K562 (cell line): ENCODE measurements at regions of chr1 and their contacts with region 1.

Region 1: DNA sequence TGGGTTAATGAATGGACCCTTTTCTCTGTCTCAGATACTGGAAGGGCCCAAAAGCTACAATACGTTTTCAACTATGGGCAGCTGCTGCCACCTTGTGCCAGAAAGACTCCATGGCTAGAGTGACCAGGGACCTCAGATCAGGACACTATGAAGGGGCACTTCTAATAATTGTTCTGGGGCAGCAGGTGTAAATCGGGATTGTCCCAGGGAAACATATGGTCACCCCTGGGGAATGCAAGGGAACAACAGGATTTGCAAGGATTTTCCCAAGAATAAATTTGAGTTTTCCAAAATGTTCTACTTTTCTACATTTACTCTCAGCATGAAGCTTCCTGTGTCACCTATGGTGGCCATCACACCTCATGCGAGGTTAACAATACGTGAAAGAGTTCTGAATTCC is 12.0 kb upstream of the FCAMR start:
- DNase-seq: peak; percentile 68 to 78 (median 74)
- ATAC-seq: peak; percentile 93
- H3K4me3 ChIP-seq: no peak overlapping the region
- H3K27ac ChIP-seq: no peak overlapping the region
- H3K4me1 ChIP-seq: peaks cover 0 to 23% of the 10 kb centered on the region in 2 experiments; a peak in 3 of 5 replicates
- H3K27me3 ChIP-seq: no peaks in the 10 kb centered on the region
- CTCF ChIP-seq: peak; percentile 87 to 90 (median 88)
- EP300 ChIP-seq: no peak
- POLR2A ChIP-seq: no peak
- RAD21 ChIP-seq: peak; percentile 92 to 94

Region 2: GRCh38 chr1:206583707-206584648 is 398.2 kb before region 1 on chr1:
- CTCF ChIA-PET with region 1: no interaction called
- POLR2A ChIA-PET with region 1: no interaction called
- in situ Hi-C with region 1: no loop called
- intact Hi-C with region 1: no loop called
- DNase-seq: peak; percentile 89 to 91 (median 90)
- ATAC-seq: peak; percentile 95
- H3K4me3 ChIP-seq: no peak overlapping the region
- H3K27ac ChIP-seq: no peak overlapping the region
- H3K4me1 ChIP-seq: peaks cover 9 to 23% of the 10 kb centered on the region in 2 experiments
- H3K27me3 ChIP-seq: no peaks in the 10 kb centered on the region
- CTCF ChIP-seq: peak; percentile 93 to 98 (median 98)
- EP300 ChIP-seq: no peak
- POLR2A ChIP-seq: no peak
- RAD21 ChIP-seq: peak; percentile 98 to 99

Region 3: DNA sequence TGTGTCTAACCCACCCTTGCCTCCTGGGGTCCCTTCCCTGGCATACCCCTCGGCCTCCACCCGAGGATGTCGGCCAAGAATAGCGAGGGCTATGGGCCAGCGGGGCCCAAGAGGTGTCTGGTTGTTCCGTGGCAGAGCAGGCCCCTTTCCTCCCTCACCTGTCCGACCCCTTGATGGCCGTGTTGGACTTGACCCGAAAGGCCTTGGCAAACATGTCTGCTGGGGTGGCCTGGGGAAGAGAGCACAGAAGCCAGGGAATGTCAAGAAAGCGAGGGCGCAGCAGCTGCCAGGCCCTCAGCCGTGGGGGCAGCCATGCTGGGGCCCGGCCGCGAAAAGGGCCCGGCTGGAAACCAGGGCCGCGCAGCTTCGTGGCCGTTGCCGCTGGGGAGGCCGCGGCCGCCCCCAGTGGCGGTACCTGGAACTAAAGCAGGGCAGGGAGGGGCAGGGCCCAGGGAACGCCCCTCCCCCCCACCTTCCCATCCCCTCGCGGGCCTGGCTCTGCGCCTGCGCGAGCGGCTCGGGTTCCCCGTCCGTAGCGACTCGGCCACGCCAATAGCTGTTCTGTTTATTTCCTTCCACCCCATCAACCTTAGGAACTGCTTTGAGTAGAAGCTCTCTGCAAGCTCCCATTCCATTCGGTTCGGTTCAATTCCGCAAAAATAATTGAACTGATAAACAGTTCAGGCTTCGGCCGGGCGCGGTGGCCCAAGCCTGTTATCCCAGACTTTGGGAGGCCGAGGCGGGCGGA is 369.9 kb before region 1 on chr1 and contains the start of gene EIF2D:
- CTCF ChIA-PET with region 1: interaction called, 10 read pairs
- POLR2A ChIA-PET with region 1: no interaction called
- in situ Hi-C with region 1: no loop called
- intact Hi-C with region 1: loop called (anchors 5 kb)
- DNase-seq: peak; percentile 98 to 100 (median 100)
- ATAC-seq: peak; percentile 98
- H3K4me3 ChIP-seq: peak within 1 kb of the TSS; percentile 97
- H3K27ac ChIP-seq: peak within 1 kb of the TSS; percentile 94
- H3K4me1 ChIP-seq: peaks cover 5 to 7% of the 10 kb centered on the region in 2 experiments; a peak in 4 of 5 replicates
- H3K27me3 ChIP-seq: no peaks in the 10 kb centered on the region
- CTCF ChIP-seq: peak; percentile 98 to 99 (median 98)
- EP300 ChIP-seq: no peak
- POLR2A ChIP-seq: peak; percentile 99
- RAD21 ChIP-seq: peak; percentile 73
- polyA plus RNA-seq, gene EIF2D: 86.9 to 130 TPM

Region 4: GRCh38 chr1:206725109-206725963 is 256.9 kb before region 1 on chr1:
- CTCF ChIA-PET with region 1: interaction called, 3 read pairs
- POLR2A ChIA-PET with region 1: interaction called, 4 read pairs
- in situ Hi-C with region 1: no loop called
- intact Hi-C with region 1: loop called (anchors 5 kb)
- DNase-seq: peak; percentile 69 to 82 (median 72)
- ATAC-seq: peak; percentile 88
- H3K4me3 ChIP-seq: no peak overlapping the region
- H3K27ac ChIP-seq: no peak overlapping the region
- H3K4me1 ChIP-seq: peaks cover 19 to 27% of the 10 kb centered on the region in 2 experiments
- H3K27me3 ChIP-seq: no peaks in the 10 kb centered on the region
- CTCF ChIP-seq: peak; percentile 77 to 87 (median 82)
- EP300 ChIP-seq: no peak
- POLR2A ChIP-seq: no peak
- RAD21 ChIP-seq: peak; percentile 45 to 51

Region 5: GRCh38 chr1:206808615-206809014 is 173.6 kb before region 1 on chr1:
- CTCF ChIA-PET with region 1: interaction called, 3 read pairs
- POLR2A ChIA-PET with region 1: no interaction called
- in situ Hi-C with region 1: no loop called
- intact Hi-C with region 1: loop called (anchors 5 kb)
- DNase-seq: peak; percentile 30 to 71 (median 48)
- ATAC-seq: peak; percentile 97
- H3K4me3 ChIP-seq: no peak overlapping the region
- H3K27ac ChIP-seq: no peak overlapping the region
- H3K4me1 ChIP-seq: no peaks in the 10 kb centered on the region
- H3K27me3 ChIP-seq: peaks cover 5 to 13% of the 10 kb centered on the region in 2 experiments; a peak in 3 of 5 replicates
- CTCF ChIP-seq: peak; percentile 75 to 81 (median 77)
- EP300 ChIP-seq: no peak
- POLR2A ChIP-seq: no peak
- RAD21 ChIP-seq: peak; percentile 92 to 95

Region 6: DNA sequence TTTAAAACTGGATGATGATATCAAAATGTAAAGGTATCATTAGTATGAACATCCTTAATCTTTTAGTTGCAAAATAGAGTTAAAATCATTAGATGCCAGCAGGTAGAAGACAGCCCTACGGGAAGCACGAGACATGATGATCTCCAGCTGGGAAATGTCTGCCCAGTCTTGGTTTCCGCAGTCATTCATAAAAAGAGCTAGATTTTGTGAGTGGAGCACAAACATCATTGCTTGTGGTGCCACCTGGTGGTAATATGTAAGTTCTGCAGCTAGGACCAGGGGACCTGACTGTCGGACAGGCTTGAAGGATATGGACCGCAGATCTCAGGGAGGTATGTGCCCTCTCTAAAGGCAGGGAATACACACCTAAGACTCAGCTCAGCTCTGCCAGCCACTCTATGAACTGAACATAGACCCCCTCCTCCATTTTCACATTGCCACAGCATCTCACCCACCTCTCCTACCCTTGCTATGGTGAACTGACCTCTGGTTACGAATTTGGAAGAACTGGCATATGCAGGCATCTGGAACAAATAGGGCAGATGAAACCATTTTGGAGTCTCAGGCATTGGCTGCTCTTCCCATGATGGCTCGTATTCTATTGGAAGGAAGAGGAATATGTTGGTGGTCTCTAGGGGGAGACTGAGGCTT is 69.6 kb before region 1 on chr1:
- CTCF ChIA-PET with region 1: interaction called, 7 read pairs
- POLR2A ChIA-PET with region 1: no interaction called
- in situ Hi-C with region 1: no loop called
- intact Hi-C with region 1: loop called (anchors 1 kb)
- DNase-seq: peak; percentile 81 to 89 (median 84)
- ATAC-seq: peak; percentile 81
- H3K4me3 ChIP-seq: no peak overlapping the region
- H3K27ac ChIP-seq: no peak overlapping the region
- H3K4me1 ChIP-seq: peaks cover 4 to 12% of the 10 kb centered on the region in 2 experiments; a peak in 3 of 5 replicates
- H3K27me3 ChIP-seq: peaks cover 45 to 63% of the 10 kb centered on the region in 2 experiments
- CTCF ChIP-seq: peak; percentile 90 to 92 (median 92)
- EP300 ChIP-seq: no peak
- POLR2A ChIP-seq: no peak
- RAD21 ChIP-seq: peak; percentile 87 to 94

Region 7: DNA sequence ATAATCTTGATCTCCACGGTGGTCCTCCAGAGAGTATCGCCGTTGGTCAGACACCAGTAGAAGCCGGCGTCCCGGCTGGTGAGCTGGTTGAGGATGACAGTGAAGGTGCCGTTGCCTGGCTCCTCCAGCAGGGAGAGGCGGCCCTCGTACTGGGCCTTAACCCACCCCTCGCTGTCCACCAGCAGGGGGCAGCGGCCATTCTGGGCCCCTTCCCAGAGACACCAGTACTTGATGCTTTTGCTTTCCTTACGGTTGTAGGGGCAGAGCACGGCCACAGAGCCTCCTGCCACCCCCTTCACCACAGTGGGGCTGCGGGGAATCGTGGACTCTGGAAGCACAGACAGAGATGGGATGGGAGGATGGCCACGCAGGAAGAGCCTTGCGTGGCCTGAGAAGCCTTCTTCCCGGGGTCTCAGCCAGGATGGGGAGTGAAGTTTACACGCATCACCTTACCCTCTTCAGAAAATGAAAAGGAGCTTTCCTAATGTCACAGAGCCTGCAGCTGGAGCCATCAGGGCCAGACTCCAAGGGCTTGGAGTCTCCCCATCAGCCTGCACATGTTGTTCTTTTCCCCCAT is 46.6 kb before region 1 on chr1:
- CTCF ChIA-PET with region 1: interaction called, 83 read pairs
- POLR2A ChIA-PET with region 1: no interaction called
- in situ Hi-C with region 1: no loop called
- intact Hi-C with region 1: loop called (anchors 1 kb)
- DNase-seq: peak; percentile 91 to 96 (median 92)
- ATAC-seq: peak; percentile 99
- H3K4me3 ChIP-seq: no peak overlapping the region
- H3K27ac ChIP-seq: no peak overlapping the region
- H3K4me1 ChIP-seq: peaks cover 9% of the 10 kb centered on the region in 2 experiments; a peak in 4 of 5 replicates
- H3K27me3 ChIP-seq: no peaks in the 10 kb centered on the region
- CTCF ChIP-seq: peak; percentile 100
- EP300 ChIP-seq: peak; percentile 31; the same call in 1 of the 2 replicates
- POLR2A ChIP-seq: no peak
- RAD21 ChIP-seq: peak; percentile 99

Region 8: GRCh38 chr1:207404849-207405525 is 422.8 kb after region 1 on chr1:
- CTCF ChIA-PET with region 1: no interaction called
- POLR2A ChIA-PET with region 1: no interaction called
- in situ Hi-C with region 1: no loop called
- intact Hi-C with region 1: loop called (anchors 10 kb)
- DNase-seq: peak; percentile 66 to 78 (median 68)
- ATAC-seq: peak; percentile 98
- H3K4me3 ChIP-seq: no peak overlapping the region
- H3K27ac ChIP-seq: no peak overlapping the region
- H3K4me1 ChIP-seq: peaks cover 0 to 7% of the 10 kb centered on the region in 2 experiments; a peak in 2 of 5 replicates
- H3K27me3 ChIP-seq: no peaks in the 10 kb centered on the region
- CTCF ChIP-seq: peak; percentile 71 to 86 (median 74)
- EP300 ChIP-seq: no peak
- POLR2A ChIP-seq: no peak
- RAD21 ChIP-seq: peak; percentile 95 to 99